MCF 10A (cell line): ENCODE measurements at regions of chr2 and their contacts with region 1.

Region 1: GRCh38 chr2:226916669-226917068 is 80.8 kb downstream of the RHBDD1 start:
- DNase-seq: no peak
- H3K4me3 Mint-ChIP-seq: no peak overlapping the region
- H3K27ac Mint-ChIP-seq: peak overlapping the region; percentile 97
- H3K4me1 Mint-ChIP-seq: peaks cover 28% of the 10 kb centered on the region
- H3K27me3 Mint-ChIP-seq: no peaks in the 10 kb centered on the region
- CTCF ChIP-seq: no peak

Region 2: DNA sequence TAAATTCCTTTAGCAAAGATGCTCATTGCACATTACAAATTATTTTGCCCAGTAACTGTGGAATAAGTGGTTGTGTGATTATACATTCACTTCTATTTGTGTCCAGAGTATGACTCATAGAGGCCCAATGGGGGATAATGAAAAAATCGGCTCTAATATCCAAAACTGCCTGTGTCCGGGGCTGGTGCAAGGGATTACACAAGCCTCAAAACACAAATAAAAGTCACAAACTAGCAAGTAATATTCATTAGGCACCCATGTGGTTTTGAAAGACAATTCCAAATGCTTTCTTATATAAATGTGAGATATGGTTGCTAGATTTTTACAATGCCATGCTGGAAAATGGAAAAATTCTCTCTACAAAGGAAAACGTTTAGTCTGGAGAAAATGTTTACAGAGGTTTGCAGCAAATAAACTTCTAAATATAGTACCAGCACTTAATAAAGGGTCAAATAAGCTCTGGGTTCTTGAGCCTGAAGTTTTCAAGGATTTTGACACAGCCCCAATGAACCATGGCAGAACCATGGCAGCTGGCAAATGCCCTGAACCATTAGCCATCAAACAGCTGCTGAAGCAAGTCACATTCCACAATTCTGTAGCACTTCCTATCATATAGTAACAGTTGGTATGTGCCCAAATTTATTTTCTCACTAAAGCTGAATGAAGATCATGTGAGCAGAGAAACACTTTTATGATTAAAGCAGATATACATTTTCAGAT is 157.6 kb before region 1 on chr2:
- CTCF ChIA-PET with region 1: no interaction called
- POLR2A ChIA-PET with region 1: no interaction called
- intact Hi-C with region 1: no loop called
- DNase-seq: peak; percentile 67
- H3K4me3 Mint-ChIP-seq: no peak overlapping the region
- H3K27ac Mint-ChIP-seq: peak overlapping the region; percentile 31
- H3K4me1 Mint-ChIP-seq: peaks cover 15% of the 10 kb centered on the region
- H3K27me3 Mint-ChIP-seq: no peaks in the 10 kb centered on the region
- CTCF ChIP-seq: no peak

Region 3: DNA sequence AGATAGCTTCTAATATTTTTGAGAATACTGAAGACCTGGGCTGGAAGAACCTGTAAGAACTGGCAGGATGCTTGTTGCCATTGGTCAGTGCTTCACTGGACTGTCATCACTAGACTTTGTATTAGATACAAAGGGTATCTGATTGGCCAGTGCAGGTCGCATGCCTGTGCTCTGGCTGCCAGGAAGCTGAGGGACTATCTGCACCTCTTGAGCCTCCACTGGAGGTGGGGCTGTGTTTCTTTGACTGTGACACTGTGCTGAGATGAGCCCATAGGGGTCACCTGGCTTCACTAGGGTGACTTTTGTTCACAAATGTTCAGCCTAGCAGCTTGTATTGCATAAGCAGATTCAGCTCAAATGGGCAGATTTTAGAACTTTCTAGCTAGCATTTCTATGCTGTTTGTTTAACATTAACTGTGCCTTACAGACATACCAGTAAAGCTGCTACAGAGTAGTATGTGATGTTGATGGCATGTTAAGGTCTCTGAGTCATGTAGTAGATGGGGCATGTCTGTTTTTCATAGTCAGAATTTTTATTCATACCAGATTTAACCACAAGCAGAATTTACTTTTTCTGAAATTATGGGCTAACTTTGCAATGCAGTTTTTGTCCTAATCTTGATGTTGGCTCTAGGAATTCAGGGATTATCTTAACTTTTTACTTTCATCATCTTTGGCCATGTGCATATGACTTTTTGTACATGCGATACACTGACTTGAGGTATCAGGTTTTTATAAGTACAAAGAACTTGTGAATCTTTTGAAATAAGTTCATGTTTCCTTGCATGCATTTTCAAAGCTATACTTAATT is 24.7 kb before region 1 on chr2:
- CTCF ChIA-PET with region 1: no interaction called
- POLR2A ChIA-PET with region 1: interaction called, 51 read pairs
- intact Hi-C with region 1: no loop called
- DNase-seq: peak; percentile 30
- H3K4me3 Mint-ChIP-seq: peak overlapping the region; percentile 23
- H3K27ac Mint-ChIP-seq: peak overlapping the region; percentile 63
- H3K4me1 Mint-ChIP-seq: peaks cover 26% of the 10 kb centered on the region
- H3K27me3 Mint-ChIP-seq: no peaks in the 10 kb centered on the region
- CTCF ChIP-seq: no peak

Region 4: GRCh38 chr2:226906163-226906693 is 10.4 kb before region 1 on chr2:
- CTCF ChIA-PET with region 1: interaction called, 4 read pairs
- POLR2A ChIA-PET with region 1: interaction called, 37 read pairs
- intact Hi-C with region 1: no loop called
- DNase-seq: no peak
- H3K4me3 Mint-ChIP-seq: no peak overlapping the region
- H3K27ac Mint-ChIP-seq: no peak overlapping the region
- H3K4me1 Mint-ChIP-seq: peaks cover 7% of the 10 kb centered on the region
- H3K27me3 Mint-ChIP-seq: no peaks in the 10 kb centered on the region
- CTCF ChIP-seq: no peak

Region 5: DNA sequence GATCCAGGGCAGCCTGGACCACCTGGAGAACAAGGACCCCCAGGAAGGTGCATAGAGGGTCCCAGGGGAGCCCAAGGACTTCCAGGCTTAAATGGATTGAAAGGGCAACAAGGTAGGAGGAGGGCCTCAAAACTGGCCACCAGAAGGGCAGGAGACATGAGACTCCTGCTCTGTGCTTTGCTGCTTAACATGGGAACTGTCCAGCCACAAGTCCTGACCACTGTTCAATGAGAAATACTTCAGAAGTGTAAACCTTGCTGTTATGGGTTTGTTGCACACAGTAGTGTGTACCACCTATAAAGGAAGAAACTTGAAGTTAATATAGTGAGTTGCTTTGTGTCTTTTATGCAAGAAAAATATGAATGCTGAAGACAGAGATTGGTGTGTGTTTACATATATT is 364.2 kb after region 1 on chr2:
- CTCF ChIA-PET with region 1: no interaction called
- POLR2A ChIA-PET with region 1: no interaction called
- intact Hi-C with region 1: no loop called
- DNase-seq: no peak
- H3K4me3 Mint-ChIP-seq: no peak overlapping the region
- H3K27ac Mint-ChIP-seq: no peak overlapping the region
- H3K4me1 Mint-ChIP-seq: no peaks in the 10 kb centered on the region
- H3K27me3 Mint-ChIP-seq: no peaks in the 10 kb centered on the region
- CTCF ChIP-seq: no peak